K562 (cell line): ENCODE measurements at regions of chr7 and their contacts with region 1.

Region 1: DNA sequence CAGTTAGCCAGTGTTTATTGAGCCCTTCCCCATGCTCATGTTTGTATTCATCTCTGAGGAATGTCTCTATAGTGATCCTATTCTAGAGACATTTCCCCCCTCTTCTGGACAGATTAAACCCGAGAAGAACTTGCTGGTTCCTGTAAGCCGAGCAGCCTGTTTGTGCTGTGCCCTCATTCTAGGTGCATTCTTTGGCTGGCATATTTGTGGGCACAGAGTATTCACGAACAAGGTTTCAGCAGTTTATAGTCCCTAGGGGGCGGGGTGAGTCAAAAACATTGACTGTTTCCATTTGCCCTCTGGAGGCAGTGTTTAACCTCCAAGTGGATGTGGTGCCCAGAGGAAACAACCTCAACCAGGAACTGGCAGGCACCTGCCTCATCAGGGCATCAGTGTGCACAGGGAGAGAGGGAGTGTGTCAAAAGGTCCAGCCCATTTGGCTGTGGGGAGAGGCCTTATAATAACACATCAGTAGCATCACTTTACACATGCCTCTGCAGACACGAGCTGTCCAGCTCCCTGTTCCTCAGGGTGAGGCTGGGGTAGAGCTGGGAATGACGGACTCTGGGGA is 273.3 kb upstream of the LRGUK start:
- DNase-seq: peak; percentile 34 to 54 (median 43)
- ATAC-seq: peak; percentile 96
- H3K4me3 ChIP-seq: no peak overlapping the region
- H3K27ac ChIP-seq: no peak overlapping the region
- H3K4me1 ChIP-seq: no peaks in the 10 kb centered on the region
- H3K27me3 ChIP-seq: no peaks in the 10 kb centered on the region
- CTCF ChIP-seq: peak; percentile 91 to 99 (median 99)
- EP300 ChIP-seq: no peak
- POLR2A ChIP-seq: no peak
- RAD21 ChIP-seq: peak in 1 of 2 experiments; percentile 64; a peak in 3 of 4 replicates

Region 2: DNA sequence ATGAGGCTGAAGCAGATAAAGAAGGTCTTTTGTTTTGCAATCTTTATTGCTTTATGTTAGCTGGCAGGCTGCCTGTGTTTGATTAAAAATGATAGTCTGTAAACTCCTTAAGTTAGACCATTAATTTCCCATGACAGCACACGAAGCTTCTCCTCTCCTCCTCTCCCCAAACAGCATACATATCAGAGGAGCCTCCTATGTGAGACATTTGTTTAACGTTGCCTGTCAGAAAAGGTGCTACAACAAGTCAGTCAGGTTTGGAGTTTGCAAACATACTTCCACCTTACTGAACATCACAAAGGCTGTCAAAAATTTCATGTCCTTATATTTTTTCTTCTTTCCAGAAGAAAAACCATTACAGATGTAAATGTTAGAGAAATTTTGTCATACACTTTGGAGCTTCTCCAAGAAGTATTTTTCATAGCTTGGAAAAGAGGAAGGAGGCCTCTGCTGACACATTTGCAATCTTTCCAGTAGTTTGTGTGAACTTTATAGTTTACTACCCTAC is 207.9 kb before region 1 on chr7:
- CTCF ChIA-PET with region 1: no interaction called
- POLR2A ChIA-PET with region 1: no interaction called
- in situ Hi-C with region 1: no loop called
- intact Hi-C with region 1: no loop called
- DNase-seq: no peak
- ATAC-seq: no peak
- H3K4me3 ChIP-seq: no peak overlapping the region
- H3K27ac ChIP-seq: no peak overlapping the region
- H3K4me1 ChIP-seq: no peaks in the 10 kb centered on the region
- H3K27me3 ChIP-seq: no peaks in the 10 kb centered on the region
- CTCF ChIP-seq: no peak
- EP300 ChIP-seq: no peak
- POLR2A ChIP-seq: no peak
- RAD21 ChIP-seq: no peak

Region 3: DNA sequence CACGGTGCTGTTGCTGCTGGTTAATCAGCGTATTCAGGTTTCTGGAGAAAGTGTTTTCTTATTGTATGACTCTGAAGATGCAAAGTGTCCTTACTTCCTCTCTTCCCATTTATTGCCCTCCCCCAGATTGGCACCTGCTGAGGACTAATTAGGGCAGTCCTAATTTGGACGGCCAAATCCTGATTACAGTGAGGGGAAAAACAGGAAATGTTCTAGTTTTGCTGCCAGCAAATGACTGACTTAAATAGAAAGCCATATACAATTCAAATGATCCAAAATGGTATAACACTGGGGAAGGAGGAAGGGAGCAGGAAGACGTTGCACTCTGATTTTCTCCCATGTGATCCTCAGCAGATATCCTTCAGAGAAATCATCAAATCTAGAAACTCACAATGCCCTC is 51.0 kb after region 1 on chr7:
- CTCF ChIA-PET with region 1: no interaction called
- POLR2A ChIA-PET with region 1: no interaction called
- in situ Hi-C with region 1: no loop called
- intact Hi-C with region 1: no loop called
- DNase-seq: no peak
- ATAC-seq: no peak
- H3K4me3 ChIP-seq: no peak overlapping the region
- H3K27ac ChIP-seq: no peak overlapping the region
- H3K4me1 ChIP-seq: no peaks in the 10 kb centered on the region
- H3K27me3 ChIP-seq: no peaks in the 10 kb centered on the region
- CTCF ChIP-seq: no peak
- EP300 ChIP-seq: no peak
- POLR2A ChIP-seq: no peak
- RAD21 ChIP-seq: no peak

Region 4: DNA sequence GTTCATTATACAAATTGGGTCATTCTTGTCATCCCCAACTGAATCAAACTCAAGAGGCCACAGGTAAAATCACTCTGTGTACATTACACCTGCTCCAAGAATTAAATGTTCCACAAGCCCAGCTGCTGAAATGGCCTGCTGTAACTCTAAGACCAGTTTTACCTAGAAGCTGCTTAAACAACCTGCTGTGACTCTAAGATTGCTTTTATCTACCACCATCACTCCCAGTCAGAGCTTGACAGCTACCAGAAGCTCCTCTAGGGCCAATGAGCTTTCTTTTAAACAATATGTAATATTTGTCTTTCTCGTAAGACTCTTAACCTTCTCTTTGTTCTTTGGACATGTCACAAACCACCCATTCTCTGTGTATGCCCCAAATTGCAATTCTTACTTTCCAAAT is 131.5 kb after region 1 on chr7:
- CTCF ChIA-PET with region 1: no interaction called
- POLR2A ChIA-PET with region 1: no interaction called
- in situ Hi-C with region 1: no loop called
- intact Hi-C with region 1: loop called (anchors 2 kb)
- DNase-seq: peak in 2 of 4 experiments; percentile 42 to 57
- ATAC-seq: peak; percentile 84
- H3K4me3 ChIP-seq: no peak overlapping the region
- H3K27ac ChIP-seq: no peak overlapping the region
- H3K4me1 ChIP-seq: peaks cover 0 to 7% of the 10 kb centered on the region in 2 experiments; a peak in 1 of 5 replicates
- H3K27me3 ChIP-seq: no peaks in the 10 kb centered on the region
- CTCF ChIP-seq: no peak
- EP300 ChIP-seq: no peak
- POLR2A ChIP-seq: no peak
- RAD21 ChIP-seq: no peak

Region 5: DNA sequence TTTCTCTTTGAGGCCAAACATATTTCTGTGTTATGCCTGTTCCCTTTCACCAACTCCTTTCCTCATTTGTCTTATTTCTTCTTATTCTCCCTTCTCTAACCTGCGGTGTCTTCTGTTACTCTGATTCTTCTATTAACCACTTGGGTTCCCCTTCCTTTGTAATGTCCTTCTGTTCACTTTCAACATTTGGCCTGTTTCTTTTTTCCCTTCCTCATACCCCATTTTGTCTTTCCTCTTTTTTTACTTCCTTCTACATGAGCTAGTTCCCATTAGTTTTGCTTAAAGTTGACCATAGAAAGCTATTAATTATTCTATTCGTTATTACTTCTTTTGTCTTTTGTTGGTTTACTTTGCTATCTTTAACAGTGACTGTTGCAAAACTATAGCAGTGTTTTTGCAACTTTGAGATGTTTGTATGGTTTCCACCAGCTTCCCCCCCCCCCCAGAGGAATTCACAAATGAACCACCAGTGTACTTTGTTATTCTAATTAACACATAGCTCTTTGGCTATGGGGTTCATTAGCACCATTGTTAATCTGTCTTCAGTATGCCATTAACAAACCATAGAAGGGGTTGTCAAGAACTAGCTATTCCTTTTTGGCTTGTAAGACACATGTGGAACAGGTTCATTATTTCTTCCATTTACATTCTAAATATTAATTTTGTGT is 276.2 kb after region 1 on chr7:
- CTCF ChIA-PET with region 1: no interaction called
- POLR2A ChIA-PET with region 1: no interaction called
- in situ Hi-C with region 1: no loop called
- intact Hi-C with region 1: loop called (anchors 10 kb)
- DNase-seq: no peak
- ATAC-seq: no peak
- H3K4me3 ChIP-seq: no peak overlapping the region
- H3K27ac ChIP-seq: no peak overlapping the region
- H3K4me1 ChIP-seq: peaks cover 6 to 11% of the 10 kb centered on the region in 2 experiments; a peak in 3 of 5 replicates
- H3K27me3 ChIP-seq: peaks cover 10 to 18% of the 10 kb centered on the region in 2 experiments; a peak in 3 of 5 replicates
- CTCF ChIP-seq: no peak
- EP300 ChIP-seq: no peak
- POLR2A ChIP-seq: no peak
- RAD21 ChIP-seq: no peak